H1 (cell line): ENCODE measurements at regions of chr6 and their contacts with region 1.

Region 1: GRCh38 chr6:29737707-29738630 is 14.7 kb downstream of the HLA-F start:
- DNase-seq: peak in 1 of 2 experiments; percentile 84
- H3K4me3 ChIP-seq: no peak overlapping the region
- H3K27ac ChIP-seq: no peak overlapping the region
- H3K4me1 ChIP-seq: peaks cover 0 to 4% (median 0%) of the 10 kb centered on the region in 4 experiments; a peak in 2 of 7 replicates
- H3K27me3 ChIP-seq: no peaks in the 10 kb centered on the region
- CTCF ChIP-seq: peak; percentile 80 to 96 (median 94)
- EP300 ChIP-seq: no peak
- POLR2A ChIP-seq: no peak
- RAD21 ChIP-seq: peak; percentile 99

Region 2: DNA sequence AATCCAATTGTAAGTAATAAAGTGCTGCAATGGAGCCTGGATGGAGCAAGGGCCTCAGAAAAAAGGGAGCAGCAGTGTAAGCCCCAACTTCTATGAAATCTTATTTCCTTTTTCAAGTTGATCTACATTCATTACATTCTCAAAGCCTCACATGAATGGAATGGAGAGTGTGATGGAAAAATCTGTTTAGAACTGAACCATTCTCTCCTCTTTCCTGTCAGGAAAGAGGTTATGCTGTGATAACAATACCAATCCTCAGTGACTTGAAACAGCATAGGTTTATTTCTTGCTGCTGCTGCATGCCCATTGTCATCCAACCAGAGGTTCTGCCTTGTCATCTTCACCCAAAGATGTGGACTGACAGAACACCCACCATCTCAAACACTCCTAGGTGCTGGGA is 161.9 kb before region 1 on chr6:
- CTCF ChIA-PET with region 1: no interaction called
- POLR2A ChIA-PET with region 1: no interaction called
- DNase-seq: no peak
- H3K4me3 ChIP-seq: no peak overlapping the region
- H3K27ac ChIP-seq: no peak overlapping the region
- H3K4me1 ChIP-seq: no peaks in the 10 kb centered on the region
- H3K27me3 ChIP-seq: no peaks in the 10 kb centered on the region
- CTCF ChIP-seq: no peak
- EP300 ChIP-seq: no peak
- POLR2A ChIP-seq: no peak
- RAD21 ChIP-seq: no peak

Region 3: DNA sequence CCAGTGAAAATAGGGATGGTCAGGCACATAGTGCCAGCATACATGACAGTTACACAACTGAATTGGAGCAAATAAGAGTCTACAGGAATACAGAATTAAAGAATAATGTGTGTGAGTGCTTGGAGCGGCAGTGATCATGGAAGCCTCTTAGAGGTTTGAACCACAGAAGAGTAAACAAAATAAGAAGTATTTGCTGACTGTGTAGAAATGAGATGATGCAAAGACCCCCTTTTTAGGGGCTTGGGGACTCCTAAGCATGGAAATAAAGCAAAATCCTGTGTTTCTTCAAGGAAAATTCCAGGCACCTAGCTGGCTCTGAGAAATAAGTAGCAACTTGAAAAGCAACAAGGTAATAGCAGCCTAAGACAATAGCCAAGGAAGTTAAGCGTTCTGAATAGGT is 146.3 kb before region 1 on chr6:
- CTCF ChIA-PET with region 1: no interaction called
- POLR2A ChIA-PET with region 1: no interaction called
- DNase-seq: no peak
- H3K4me3 ChIP-seq: no peak overlapping the region
- H3K27ac ChIP-seq: no peak overlapping the region
- H3K4me1 ChIP-seq: no peaks in the 10 kb centered on the region; a peak in 1 of 7 replicates
- H3K27me3 ChIP-seq: no peaks in the 10 kb centered on the region
- CTCF ChIP-seq: no peak
- EP300 ChIP-seq: no peak
- POLR2A ChIP-seq: no peak
- RAD21 ChIP-seq: no peak

Region 4: GRCh38 chr6:29705389-29706231 is 32.4 kb before region 1 on chr6:
- CTCF ChIA-PET with region 1: interaction called, 18 read pairs
- POLR2A ChIA-PET with region 1: no interaction called
- DNase-seq: peak in 1 of 2 experiments; percentile 52
- H3K4me3 ChIP-seq: no peak overlapping the region
- H3K27ac ChIP-seq: no peak overlapping the region
- H3K4me1 ChIP-seq: no peaks in the 10 kb centered on the region; a peak in 1 of 7 replicates
- H3K27me3 ChIP-seq: no peaks in the 10 kb centered on the region
- CTCF ChIP-seq: peak in 2 of 3 experiments; percentile 65 to 72; a peak in 3 of 4 replicates
- EP300 ChIP-seq: no peak
- POLR2A ChIP-seq: no peak
- RAD21 ChIP-seq: peak; percentile 87 to 89

Region 5: DNA sequence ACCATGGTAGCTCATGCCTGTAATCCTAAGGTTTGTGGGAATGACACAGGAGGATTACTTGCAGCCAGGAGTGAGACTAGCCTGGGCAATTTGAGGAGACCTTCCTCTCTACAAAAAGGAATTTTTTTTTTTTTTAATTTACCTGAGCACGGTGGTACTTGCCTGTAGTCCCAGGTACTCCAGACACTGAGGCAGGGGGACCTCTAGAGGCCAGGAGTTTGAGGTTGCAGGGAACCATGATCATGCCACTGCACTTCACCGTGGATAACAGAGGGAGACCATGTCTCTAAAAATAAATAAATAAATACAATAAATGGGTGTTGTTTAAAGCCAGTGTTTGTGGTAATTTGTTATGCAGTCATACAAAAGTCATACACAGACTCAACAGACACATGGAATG is 17.1 kb before region 1 on chr6:
- CTCF ChIA-PET with region 1: interaction called, 12 read pairs
- POLR2A ChIA-PET with region 1: no interaction called
- DNase-seq: no peak
- H3K4me3 ChIP-seq: no peak overlapping the region
- H3K27ac ChIP-seq: no peak overlapping the region
- H3K4me1 ChIP-seq: peaks cover 0 to 6% (median under 1%) of the 10 kb centered on the region in 4 experiments; a peak in 3 of 7 replicates
- H3K27me3 ChIP-seq: peaks cover 10 to 34% (median 30%) of the 10 kb centered on the region in 4 experiments
- CTCF ChIP-seq: peak; percentile 42 to 54 (median 50)
- EP300 ChIP-seq: no peak
- POLR2A ChIP-seq: no peak
- RAD21 ChIP-seq: peak; percentile 39 to 54; a peak in 3 of 4 replicates

Region 6: DNA sequence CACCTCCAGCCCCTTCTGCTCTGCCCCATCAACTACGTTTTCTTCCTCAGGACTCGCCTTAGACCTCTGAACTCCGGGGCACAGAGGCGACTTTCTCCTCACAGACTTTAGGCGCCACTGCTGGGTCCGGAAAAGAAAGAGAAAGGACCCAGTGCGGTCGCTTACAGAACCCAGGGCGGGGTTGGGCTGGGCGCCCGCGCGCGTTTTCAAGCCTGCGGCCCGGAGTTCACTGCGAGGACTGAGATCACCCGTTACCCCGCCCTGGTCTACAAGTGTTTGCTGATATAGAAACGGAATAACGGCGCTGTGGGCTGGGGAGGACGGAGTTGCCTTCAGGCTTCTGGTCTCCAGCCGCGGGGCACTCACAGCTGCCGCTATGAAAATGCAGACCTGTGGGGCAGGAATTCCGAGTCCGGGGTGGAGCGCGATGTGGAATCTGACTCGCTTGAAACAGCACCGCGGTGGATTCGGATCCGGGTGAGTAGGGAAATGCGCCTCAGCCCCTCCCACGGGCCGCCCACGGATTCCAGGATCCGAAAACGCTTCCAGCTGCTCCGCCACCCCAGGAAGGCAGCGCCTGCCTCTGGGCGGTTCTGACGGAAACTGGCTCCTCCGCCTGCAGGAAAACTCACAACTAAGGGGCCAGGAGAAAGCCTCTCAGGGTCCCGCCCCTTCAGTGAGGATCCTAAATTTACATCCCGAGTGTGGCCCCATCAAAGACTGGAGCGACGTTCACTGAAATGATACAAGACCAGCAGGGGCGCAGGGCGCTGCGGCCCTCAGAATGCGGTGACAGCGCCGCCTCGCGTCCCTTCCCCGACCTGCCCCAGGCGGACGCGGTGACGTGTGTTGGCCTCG is 14.7 kb after region 1 on chr6:
- CTCF ChIA-PET with region 1: interaction called, 88 read pairs
- POLR2A ChIA-PET with region 1: interaction called, 7 read pairs
- DNase-seq: peak; percentile 82 to 91
- H3K4me3 ChIP-seq: peak overlapping the region; percentile 37 to 78 (median 69)
- H3K27ac ChIP-seq: no peak overlapping the region
- H3K4me1 ChIP-seq: peaks cover 6 to 19% (median 10%) of the 10 kb centered on the region in 4 experiments; a peak in 6 of 7 replicates
- H3K27me3 ChIP-seq: peaks cover 8 to 48% (median 38%) of the 10 kb centered on the region in 4 experiments
- CTCF ChIP-seq: peak; percentile 97 to 100 (median 99)
- EP300 ChIP-seq: peak in 1 of 2 experiments; percentile 60; a peak in 1 of 3 replicates
- POLR2A ChIP-seq: peak in 1 of 2 experiments; percentile 80; a peak in 2 of 3 replicates
- RAD21 ChIP-seq: peak; percentile 71 to 82

Region 7: DNA sequence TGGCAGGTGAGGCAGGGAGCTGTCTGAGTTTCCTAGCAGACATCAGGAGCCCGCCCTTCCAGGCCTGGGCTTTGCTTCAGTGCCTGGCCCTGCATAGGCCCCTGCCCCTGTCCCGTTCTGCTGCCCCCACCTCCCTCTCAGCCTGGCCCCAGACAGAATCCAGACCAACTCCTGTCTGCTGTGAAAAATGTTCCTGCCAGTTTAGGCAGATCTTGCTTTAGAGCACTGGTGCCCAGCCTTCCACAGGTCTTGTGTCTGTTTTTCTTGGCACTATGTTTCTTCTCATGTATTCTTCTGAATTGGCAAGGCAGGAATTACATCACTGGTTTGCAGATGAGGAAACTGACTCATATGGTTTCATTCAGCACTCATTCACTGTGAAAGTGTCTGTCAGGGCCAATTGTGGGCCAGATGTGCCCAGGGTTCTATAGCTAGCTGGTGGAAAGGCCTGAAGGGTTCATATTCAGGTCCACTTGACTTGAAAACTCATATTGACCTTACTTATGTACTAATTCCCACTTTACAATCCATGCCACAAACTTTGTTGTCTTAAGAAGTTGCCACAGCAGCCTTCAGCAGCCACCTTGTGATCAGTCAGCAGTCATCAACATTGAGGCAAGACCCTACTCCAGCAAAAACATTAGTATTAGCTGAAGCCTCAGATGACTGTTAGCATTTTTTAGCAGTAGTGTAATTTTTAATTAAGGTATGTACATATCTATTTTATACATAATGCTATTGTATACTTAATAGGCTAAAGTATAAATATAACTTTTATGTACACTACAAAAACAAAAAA is 25.7 kb after region 1 on chr6:
- CTCF ChIA-PET with region 1: interaction called, 13 read pairs
- POLR2A ChIA-PET with region 1: no interaction called
- DNase-seq: no peak
- H3K4me3 ChIP-seq: no peak overlapping the region
- H3K27ac ChIP-seq: no peak overlapping the region
- H3K4me1 ChIP-seq: peaks cover 5 to 17% (median 11%) of the 10 kb centered on the region in 4 experiments; a peak in 6 of 7 replicates
- H3K27me3 ChIP-seq: no peaks in the 10 kb centered on the region
- CTCF ChIP-seq: no peak
- EP300 ChIP-seq: no peak
- POLR2A ChIP-seq: no peak
- RAD21 ChIP-seq: no peak

Region 8: DNA sequence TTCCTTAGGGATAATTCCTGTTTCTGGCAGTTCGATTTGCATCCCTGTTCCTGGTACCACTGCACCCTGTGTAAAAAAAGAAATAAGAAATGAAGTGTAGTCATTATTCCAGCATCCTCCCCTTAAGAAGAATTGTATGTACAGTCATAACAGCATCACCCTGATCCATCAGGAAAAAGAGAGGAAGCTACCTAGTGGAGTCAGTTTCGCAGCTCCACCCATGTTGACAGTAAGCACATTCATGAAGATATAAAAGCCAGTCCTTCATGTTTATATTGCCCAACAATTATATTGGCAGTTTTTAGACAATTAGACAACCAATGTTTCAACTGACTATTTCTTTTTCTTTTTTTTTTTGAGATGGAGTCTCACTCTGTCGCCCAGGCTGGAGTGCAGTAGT is 68.4 kb after region 1 on chr6:
- CTCF ChIA-PET with region 1: interaction called, 10 read pairs
- POLR2A ChIA-PET with region 1: no interaction called
- DNase-seq: no peak
- H3K4me3 ChIP-seq: no peak overlapping the region
- H3K27ac ChIP-seq: no peak overlapping the region
- H3K4me1 ChIP-seq: no peaks in the 10 kb centered on the region
- H3K27me3 ChIP-seq: no peaks in the 10 kb centered on the region
- CTCF ChIP-seq: no peak
- EP300 ChIP-seq: no peak
- POLR2A ChIP-seq: no peak
- RAD21 ChIP-seq: no peak

Region 9: GRCh38 chr6:29828471-29828797 is 90.5 kb after region 1 on chr6:
- CTCF ChIA-PET with region 1: interaction called, 100 read pairs
- POLR2A ChIA-PET with region 1: no interaction called
- DNase-seq: peak in 1 of 2 experiments; percentile 84
- H3K4me3 ChIP-seq: peak overlapping the region in 2 of 4 experiments; percentile 37 to 72; a peak in 6 of 8 replicates
- H3K27ac ChIP-seq: no peak overlapping the region
- H3K4me1 ChIP-seq: peaks cover 0 to 4% (median 2%) of the 10 kb centered on the region in 4 experiments; a peak in 4 of 7 replicates
- H3K27me3 ChIP-seq: peaks cover 13 to 42% (median 31%) of the 10 kb centered on the region in 4 experiments
- CTCF ChIP-seq: no peak
- EP300 ChIP-seq: no peak
- POLR2A ChIP-seq: no peak
- RAD21 ChIP-seq: no peak

Region 10: DNA sequence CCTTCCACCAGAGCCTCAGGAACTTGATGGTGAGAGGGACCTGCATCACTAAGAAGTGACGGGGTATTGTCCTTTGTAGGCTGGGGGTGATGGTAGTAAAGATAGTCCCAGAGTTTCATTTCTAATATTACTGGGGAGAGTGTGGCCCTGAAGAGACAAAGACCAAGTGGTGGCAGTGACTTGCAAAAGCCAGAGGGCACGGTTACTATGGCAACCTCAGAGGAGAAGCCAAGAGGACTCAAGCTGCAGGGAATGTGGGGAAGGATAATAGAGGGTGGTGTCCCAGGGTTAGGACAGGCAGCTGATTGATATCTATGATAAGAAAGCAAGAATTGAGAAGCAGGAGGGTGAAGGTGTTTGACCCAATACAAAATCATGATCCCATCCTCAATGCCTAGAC is 132.1 kb after region 1 on chr6:
- CTCF ChIA-PET with region 1: no interaction called
- POLR2A ChIA-PET with region 1: no interaction called
- DNase-seq: no peak
- H3K4me3 ChIP-seq: no peak overlapping the region
- H3K27ac ChIP-seq: no peak overlapping the region
- H3K4me1 ChIP-seq: no peaks in the 10 kb centered on the region
- H3K27me3 ChIP-seq: peaks cover 0 to 2% (median 0%) of the 10 kb centered on the region in 4 experiments; a peak in 2 of 7 replicates
- CTCF ChIP-seq: no peak
- EP300 ChIP-seq: no peak
- POLR2A ChIP-seq: no peak
- RAD21 ChIP-seq: no peak

Region 11: DNA sequence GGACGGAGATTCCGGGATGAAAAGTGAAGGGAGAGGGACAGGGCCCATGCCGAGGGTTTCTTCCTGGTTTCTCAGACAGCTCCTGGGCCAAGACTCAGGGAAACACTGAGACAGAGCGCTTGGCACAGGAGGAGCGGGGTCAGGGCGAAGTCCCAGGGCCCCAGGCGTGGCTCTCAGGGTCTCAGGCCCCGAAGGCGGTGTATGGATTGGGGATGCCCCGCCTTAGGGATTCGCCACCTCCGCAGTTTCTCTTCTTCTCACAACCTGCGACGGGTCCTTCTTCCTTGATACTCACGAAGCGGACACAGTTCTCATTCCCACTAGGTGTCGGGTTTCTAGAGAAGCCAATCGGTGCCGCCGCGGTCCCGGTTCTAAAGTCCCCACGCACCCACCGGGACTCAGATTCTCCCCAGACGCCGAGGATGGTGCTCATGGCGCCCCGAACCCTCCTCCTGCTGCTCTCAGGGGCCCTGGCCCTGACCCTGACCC is 149.4 kb after region 1 on chr6:
- CTCF ChIA-PET with region 1: no interaction called
- POLR2A ChIA-PET with region 1: no interaction called
- DNase-seq: peak in 1 of 2 experiments; percentile 54
- H3K4me3 ChIP-seq: peak overlapping the region; percentile 61 to 78 (median 64)
- H3K27ac ChIP-seq: no peak overlapping the region
- H3K4me1 ChIP-seq: peaks cover 0 to 2% (median 0%) of the 10 kb centered on the region in 4 experiments; a peak in 1 of 7 replicates
- H3K27me3 ChIP-seq: peaks cover 14 to 39% (median 26%) of the 10 kb centered on the region in 4 experiments
- CTCF ChIP-seq: no peak
- EP300 ChIP-seq: no peak
- POLR2A ChIP-seq: no peak
- RAD21 ChIP-seq: no peak